ENCODE measurements at regions of chr1 and their contacts with region 1.

Region 1: GRCh38 chr1:66764994-66765578 is 12.8 kb downstream of the DYNLT5 start:
- DNase-seq: no peak
- ATAC-seq: peak in 1 of 4 donors; percentile 71
- H3K4me3 ChIP-seq: no peak overlapping the region
- H3K27ac ChIP-seq: no peak overlapping the region
- H3K4me1 ChIP-seq: no peaks in the 10 kb centered on the region
- H3K27me3 ChIP-seq: no peaks in the 10 kb centered on the region
- CTCF ChIP-seq: peak; percentile 76

Region 2: GRCh38 chr1:66924756-66925557 is 159.9 kb after region 1 on chr1 and contains the starts of genes DNAI4 and MIER1:
- intact Hi-C with region 1: loop called (anchors 10 kb)
- DNase-seq: peak; percentile 98 to 99
- ATAC-seq: peak; percentile 97 to 98 (median 98)
- H3K4me3 ChIP-seq: peak within 1 kb of the TSS; percentile 88
- H3K27ac ChIP-seq: peak within 1 kb of the TSS; percentile 84
- H3K4me1 ChIP-seq: peaks cover 30% of the 10 kb centered on the region
- H3K27me3 ChIP-seq: no peaks in the 10 kb centered on the region
- CTCF ChIP-seq: peak; percentile 17
- total RNA-seq, gene DNAI4: 4.5 to 6.5 (median 5.3) TPM
- total RNA-seq, gene MIER1: 12.9 to 18.9 (median 15.2) TPM

Region 3: GRCh38 chr1:66996018-66996682 is 231.1 kb after region 1 on chr1:
- intact Hi-C with region 1: loop called in 1 of 2 experiments (anchors 10 kb)
- DNase-seq: no peak
- ATAC-seq: peak; percentile 57 to 75 (median 68)
- H3K4me3 ChIP-seq: no peak overlapping the region
- H3K27ac ChIP-seq: no peak overlapping the region
- H3K4me1 ChIP-seq: no peaks in the 10 kb centered on the region
- H3K27me3 ChIP-seq: no peaks in the 10 kb centered on the region
- CTCF ChIP-seq: peak; percentile 71

Region 4: DNA sequence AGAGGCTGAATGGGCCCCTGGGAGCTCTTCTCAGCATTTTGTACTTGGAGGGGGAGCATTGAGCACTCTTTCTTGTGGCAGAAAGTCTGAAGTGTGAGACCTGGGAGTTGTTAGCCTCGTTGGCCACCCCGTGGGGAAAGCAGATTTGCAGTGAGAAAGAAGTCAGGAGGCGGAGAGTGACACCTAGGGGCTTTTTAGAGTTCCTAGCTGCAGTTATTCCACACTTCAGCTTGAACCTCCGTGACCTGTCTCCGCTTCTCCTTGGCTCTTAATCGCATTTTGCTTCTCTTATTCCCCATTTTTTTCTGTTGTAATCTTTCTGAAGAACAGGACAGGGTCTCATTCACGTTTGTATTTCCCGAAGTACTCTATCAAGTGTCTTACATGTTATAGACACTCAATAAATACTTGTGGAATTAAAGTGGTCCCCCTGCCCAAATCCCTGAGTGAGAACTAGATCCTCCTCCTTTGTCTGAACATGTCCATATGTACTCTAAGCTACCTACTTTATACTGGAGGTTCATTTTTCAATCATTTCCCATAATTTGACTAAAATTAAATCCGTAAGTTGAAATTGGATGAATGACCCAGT is 384.2 kb after region 1 on chr1:
- intact Hi-C with region 1: loop called (anchors 2 to 5 kb)
- DNase-seq: peak; percentile 47 to 64
- ATAC-seq: peak; percentile 88 to 100 (median 96)
- H3K4me3 ChIP-seq: no peak overlapping the region
- H3K27ac ChIP-seq: no peak overlapping the region
- H3K4me1 ChIP-seq: no peaks in the 10 kb centered on the region
- H3K27me3 ChIP-seq: no peaks in the 10 kb centered on the region
- CTCF ChIP-seq: peak; percentile 82

Region 5: GRCh38 chr1:67214420-67215174 is 449.5 kb after region 1 on chr1:
- intact Hi-C with region 1: loop called in 1 of 2 experiments (anchors 5 kb)
- DNase-seq: no peak
- ATAC-seq: no peak
- H3K4me3 ChIP-seq: no peak overlapping the region
- H3K27ac ChIP-seq: no peak overlapping the region
- H3K4me1 ChIP-seq: no peaks in the 10 kb centered on the region
- H3K27me3 ChIP-seq: peaks cover 0 to 2% (median 0%) of the 10 kb centered on the region in 3 donors
- CTCF ChIP-seq: peak; percentile 34

Region 6: DNA sequence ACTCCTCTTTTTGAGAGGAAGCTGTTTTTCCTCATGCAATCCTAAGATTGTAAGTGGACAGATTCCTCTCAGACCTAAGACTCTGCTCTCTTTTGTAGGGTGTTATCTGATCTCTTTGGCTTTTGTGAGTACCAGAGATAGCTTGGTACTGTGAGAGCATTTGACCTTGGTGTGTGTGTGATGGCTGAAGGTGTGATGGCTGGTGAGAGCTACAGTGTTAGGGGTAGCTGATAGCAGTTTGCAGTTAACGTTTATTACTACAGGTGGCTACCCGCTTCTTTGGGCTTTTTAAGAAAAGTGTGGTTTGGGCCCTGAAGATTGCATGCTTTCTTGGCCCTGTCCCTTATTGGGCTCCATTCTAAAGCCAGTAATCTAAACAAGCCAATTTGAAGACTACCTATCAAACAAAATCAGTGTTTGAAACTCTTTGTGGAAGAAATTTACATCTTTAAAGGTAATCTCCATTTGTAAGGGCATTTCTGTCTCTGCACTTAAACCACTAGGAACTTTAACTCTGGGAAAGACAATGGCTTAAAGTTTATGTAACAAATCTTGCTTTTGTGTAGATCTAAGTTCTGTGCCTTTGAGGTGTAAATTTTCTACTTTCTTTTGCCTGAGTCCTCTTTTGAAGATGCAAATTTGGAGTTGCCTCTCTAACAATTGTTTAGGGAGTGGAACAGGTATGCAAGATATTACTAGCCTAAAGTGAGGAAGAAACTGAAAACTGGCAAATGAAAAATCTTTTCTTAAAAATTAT is 750.4 kb after region 1 on chr1:
- intact Hi-C with region 1: loop called in 1 of 2 experiments (anchors 10 kb)
- DNase-seq: no peak
- ATAC-seq: no peak
- H3K4me3 ChIP-seq: no peak overlapping the region
- H3K27ac ChIP-seq: no peak overlapping the region
- H3K4me1 ChIP-seq: no peaks in the 10 kb centered on the region
- H3K27me3 ChIP-seq: no peaks in the 10 kb centered on the region
- CTCF ChIP-seq: no peak

Region 7: GRCh38 chr1:67898033-67898726 is 1133.1 kb after region 1 on chr1:
- intact Hi-C with region 1: no loop called
- DNase-seq: no peak
- ATAC-seq: no peak
- H3K4me3 ChIP-seq: no peak overlapping the region
- H3K27ac ChIP-seq: no peak overlapping the region
- H3K4me1 ChIP-seq: no peaks in the 10 kb centered on the region
- H3K27me3 ChIP-seq: no peaks in the 10 kb centered on the region
- CTCF ChIP-seq: no peak